Transverse colon (tissue), 4 donors: ENCODE measurements at regions of chr19 and their contacts with region 1.

Region 1: GRCh38 chr19:42313096-42313839 is at the start of gene TMEM145:
- DNase-seq: peak; percentile 41
- H3K4me3 ChIP-seq: peak within 1 kb of the TSS in 3 of 4 donors; percentile 24 to 53 (median 41)
- H3K27ac ChIP-seq: no peak within 1 kb of the TSS
- H3K4me1 ChIP-seq: peaks cover 4 to 22% (median 12%) of the 10 kb centered on the region in 4 donors
- H3K27me3 ChIP-seq: peaks cover 52% of the 10 kb centered on the region
- CTCF ChIP-seq: peak in 2 of 5 experiments; percentile 1 to 9
- EP300 ChIP-seq: no peak
- POLR2A ChIP-seq: no peak
- total RNA-seq, gene TMEM145: not detected

Region 2: GRCh38 chr19:42108527-42109389 is 204.5 kb before region 1 on chr19:
- in situ Hi-C with region 1: loop called in 2 of 4 experiments (anchors 25 kb)
- intact Hi-C with region 1: no loop called
- DNase-seq: peak; percentile 86
- H3K4me3 ChIP-seq: no peak overlapping the region
- H3K27ac ChIP-seq: no peak overlapping the region
- H3K4me1 ChIP-seq: peaks cover 0 to 3% (median 1%) of the 10 kb centered on the region in 4 donors
- H3K27me3 ChIP-seq: peaks cover 12% of the 10 kb centered on the region
- CTCF ChIP-seq: peak; percentile 88 to 98 (median 95)
- EP300 ChIP-seq: no peak
- POLR2A ChIP-seq: no peak

Region 3: DNA sequence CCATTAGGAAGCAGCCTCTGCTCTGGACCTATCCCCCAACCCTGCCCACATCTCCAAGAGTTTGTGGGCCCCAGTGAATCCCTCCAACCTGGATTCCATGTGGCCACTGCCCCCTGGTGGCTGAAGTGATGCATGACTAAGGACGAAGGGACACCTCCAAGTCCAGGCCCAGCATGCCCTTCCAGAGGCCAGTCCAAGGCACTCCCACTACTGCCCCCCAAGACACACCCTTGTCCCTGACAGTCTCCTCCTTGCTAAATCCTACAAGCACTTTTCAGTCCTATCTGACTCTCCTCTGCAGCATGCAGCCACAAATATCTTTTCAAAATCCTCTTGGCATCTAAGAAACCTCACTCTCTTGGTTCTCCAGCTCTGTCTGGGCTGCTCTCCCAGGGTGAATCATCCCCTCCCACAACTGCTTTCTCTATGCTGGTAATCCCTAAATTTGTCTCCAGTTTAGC is 128.8 kb before region 1 on chr19:
- in situ Hi-C with region 1: no loop called
- intact Hi-C with region 1: no loop called
- DNase-seq: peak; percentile 80
- H3K4me3 ChIP-seq: no peak overlapping the region
- H3K27ac ChIP-seq: no peak overlapping the region
- H3K4me1 ChIP-seq: peaks cover 0 to 21% (median 3%) of the 10 kb centered on the region in 4 donors
- H3K27me3 ChIP-seq: peaks cover 32% of the 10 kb centered on the region
- CTCF ChIP-seq: peak; percentile 87 to 91 (median 88)
- EP300 ChIP-seq: no peak
- POLR2A ChIP-seq: no peak